ENCODE measurements at regions of chr14 and their contacts with region 1.

Region 1: GRCh38 chr14:53953002-53953827 is 3.4 kb downstream of the BMP4 start:
- DNase-seq: peak; percentile 74
- ATAC-seq: peak; percentile 81
- H3K4me3 ChIP-seq: peak overlapping the region; percentile 58
- H3K27ac ChIP-seq: peak overlapping the region; percentile 96
- H3K4me1 ChIP-seq: peaks cover 4% of the 10 kb centered on the region; the same call in 1 of the 2 replicates
- H3K27me3 ChIP-seq: peaks cover 15% of the 10 kb centered on the region
- CTCF ChIP-seq: no peak
- POLR2A ChIP-seq: no peak
- RAD21 ChIP-seq: no peak

Region 2: GRCh38 chr14:53190938-53191337 is 762.3 kb before region 1 on chr14:
- CTCF ChIA-PET with region 1: no interaction called
- POLR2A ChIA-PET with region 1: interaction called, 17 read pairs
- dilution Hi-C with region 1: no loop called
- in situ Hi-C with region 1: no loop called
- intact Hi-C with region 1: no loop called
- DNase-seq: peak; percentile 12
- ATAC-seq: peak; percentile 76
- H3K4me3 ChIP-seq: no peak overlapping the region
- H3K27ac ChIP-seq: no peak overlapping the region
- H3K4me1 ChIP-seq: no peaks in the 10 kb centered on the region
- H3K27me3 ChIP-seq: peaks cover 6% of the 10 kb centered on the region
- CTCF ChIP-seq: no peak
- POLR2A ChIP-seq: no peak
- RAD21 ChIP-seq: no peak

Region 3: GRCh38 chr14:53501361-53502211 is 451.6 kb before region 1 on chr14:
- CTCF ChIA-PET with region 1: no interaction called
- POLR2A ChIA-PET with region 1: interaction called, 12 read pairs
- dilution Hi-C with region 1: no loop called
- in situ Hi-C with region 1: no loop called
- intact Hi-C with region 1: no loop called
- DNase-seq: peak; percentile 93
- ATAC-seq: peak; percentile 93
- H3K4me3 ChIP-seq: no peak overlapping the region
- H3K27ac ChIP-seq: peak overlapping the region; percentile 98
- H3K4me1 ChIP-seq: peaks cover 8% of the 10 kb centered on the region
- H3K27me3 ChIP-seq: no peaks in the 10 kb centered on the region
- CTCF ChIP-seq: no peak
- POLR2A ChIP-seq: no peak
- RAD21 ChIP-seq: no peak

Region 4: GRCh38 chr14:53570411-53571387 is 382.5 kb before region 1 on chr14:
- CTCF ChIA-PET with region 1: no interaction called
- POLR2A ChIA-PET with region 1: no interaction called
- dilution Hi-C with region 1: no loop called
- in situ Hi-C with region 1: no loop called
- intact Hi-C with region 1: no loop called
- DNase-seq: no peak
- ATAC-seq: no peak
- H3K4me3 ChIP-seq: no peak overlapping the region
- H3K27ac ChIP-seq: peak overlapping the region; percentile 87; the same call in 1 of the 2 replicates
- H3K4me1 ChIP-seq: peaks cover 4% of the 10 kb centered on the region; the same call in 1 of the 2 replicates
- H3K27me3 ChIP-seq: peaks cover 2% of the 10 kb centered on the region; the same call in 1 of the 2 replicates
- CTCF ChIP-seq: no peak
- POLR2A ChIP-seq: no peak
- RAD21 ChIP-seq: no peak

Region 5: GRCh38 chr14:53670701-53671100 is 282.5 kb before region 1 on chr14:
- CTCF ChIA-PET with region 1: no interaction called
- POLR2A ChIA-PET with region 1: no interaction called
- dilution Hi-C with region 1: no loop called
- in situ Hi-C with region 1: no loop called
- intact Hi-C with region 1: loop called (anchors 5 kb)
- DNase-seq: peak; percentile 89
- ATAC-seq: peak; percentile 100
- H3K4me3 ChIP-seq: no peak overlapping the region
- H3K27ac ChIP-seq: no peak overlapping the region
- H3K4me1 ChIP-seq: peaks cover 4% of the 10 kb centered on the region; the same call in 1 of the 2 replicates
- H3K27me3 ChIP-seq: peaks cover 8% of the 10 kb centered on the region
- CTCF ChIP-seq: no peak
- POLR2A ChIP-seq: no peak
- RAD21 ChIP-seq: no peak

Region 6: GRCh38 chr14:54108481-54109471 is 155.6 kb after region 1 on chr14:
- CTCF ChIA-PET with region 1: no interaction called
- POLR2A ChIA-PET with region 1: no interaction called
- dilution Hi-C with region 1: no loop called
- in situ Hi-C with region 1: no loop called
- intact Hi-C with region 1: loop called (anchors 2 kb)
- DNase-seq: peak; percentile 82
- ATAC-seq: peak; percentile 69
- H3K4me3 ChIP-seq: no peak overlapping the region
- H3K27ac ChIP-seq: no peak overlapping the region
- H3K4me1 ChIP-seq: peaks cover 6% of the 10 kb centered on the region
- H3K27me3 ChIP-seq: no peaks in the 10 kb centered on the region; the same call in 1 of the 2 replicates
- CTCF ChIP-seq: no peak
- POLR2A ChIP-seq: no peak
- RAD21 ChIP-seq: no peak

Region 7: DNA sequence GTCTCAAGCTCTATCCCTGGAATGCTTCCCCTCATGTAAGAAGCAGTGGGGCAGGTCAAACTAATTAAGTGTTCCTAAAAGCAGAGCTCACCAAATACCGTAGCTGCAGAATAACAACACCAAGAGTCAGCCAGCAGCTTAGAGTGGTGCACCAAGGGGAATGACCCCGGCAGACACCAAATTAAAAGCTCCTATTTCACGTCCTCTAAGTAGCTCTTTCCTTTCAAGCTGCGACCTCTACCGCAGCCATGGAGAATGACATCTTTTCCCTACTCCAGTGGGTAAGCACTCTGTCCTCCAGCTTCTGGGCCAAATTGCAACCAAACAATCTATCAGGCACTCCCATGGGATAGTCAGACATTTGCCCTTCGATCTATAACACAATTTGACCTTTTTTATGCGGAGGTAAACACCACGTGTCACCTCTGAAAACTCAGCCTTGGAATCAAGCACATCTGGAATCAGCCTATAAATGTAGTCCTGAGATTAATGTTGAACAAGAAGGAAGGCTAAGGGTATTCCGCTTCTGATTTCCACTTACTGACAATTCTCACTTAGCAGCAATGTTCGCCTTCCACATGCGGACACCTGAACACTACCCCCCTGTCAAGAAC is 376.0 kb after region 1 on chr14:
- CTCF ChIA-PET with region 1: interaction called, 6 read pairs
- POLR2A ChIA-PET with region 1: no interaction called
- dilution Hi-C with region 1: no loop called
- in situ Hi-C with region 1: no loop called
- intact Hi-C with region 1: loop called (anchors 1 kb)
- DNase-seq: peak; percentile 61
- ATAC-seq: peak; percentile 99
- H3K4me3 ChIP-seq: no peak overlapping the region
- H3K27ac ChIP-seq: no peak overlapping the region
- H3K4me1 ChIP-seq: no peaks in the 10 kb centered on the region
- H3K27me3 ChIP-seq: peaks cover 12% of the 10 kb centered on the region
- CTCF ChIP-seq: peak; percentile 79
- POLR2A ChIP-seq: no peak
- RAD21 ChIP-seq: peak; percentile 86